GM10248 (cell line): ENCODE measurements at regions of chr9 and their contacts with region 1.

Region 1: DNA sequence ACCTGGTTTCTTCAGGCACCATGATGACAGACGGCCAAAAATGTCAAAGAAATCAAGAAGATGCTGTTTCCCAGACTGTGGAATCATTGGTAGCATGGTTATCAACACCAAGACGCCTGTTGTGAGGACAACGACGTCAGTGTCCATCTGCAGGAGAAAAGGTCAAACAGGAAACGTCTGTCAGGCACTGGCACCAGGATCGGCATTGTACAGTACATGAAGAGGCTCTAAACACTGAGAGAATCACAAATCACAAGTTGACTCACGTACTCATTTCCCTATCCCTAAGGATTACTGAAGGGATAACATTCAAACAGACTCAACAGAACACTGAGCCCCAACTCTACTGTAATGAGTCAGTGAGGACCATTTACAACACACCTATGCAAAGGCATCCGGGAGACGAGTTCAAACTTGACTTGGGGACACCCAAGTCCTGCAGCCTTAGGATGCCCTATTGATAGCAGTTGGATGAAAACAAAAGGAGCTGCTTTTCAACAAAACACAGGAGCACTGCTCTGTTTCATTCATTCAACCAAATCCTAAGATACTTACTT is 21.0 kb downstream of the TSC1 start:
- DNase-seq: no peak
- CTCF ChIP-seq: no peak

Region 2: DNA sequence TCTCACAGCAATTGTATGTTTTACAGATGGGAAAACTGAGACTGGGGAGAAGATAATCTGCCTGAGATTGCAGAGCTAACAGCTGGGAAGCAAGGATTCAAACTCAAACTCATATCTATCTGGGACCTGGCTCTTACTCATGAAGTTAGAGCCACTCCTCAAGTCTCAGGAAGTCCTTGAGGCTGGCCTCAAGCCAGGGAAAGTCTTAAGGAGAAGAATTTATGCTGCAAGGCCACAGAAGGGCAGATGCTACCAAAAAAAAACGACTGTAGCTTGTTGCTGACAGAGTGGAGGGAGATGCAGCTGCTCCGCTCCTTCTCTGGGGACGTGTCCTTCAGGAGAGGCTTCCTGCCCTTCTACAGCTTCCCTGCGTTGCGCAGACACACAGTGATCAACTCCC is 301.3 kb before region 1 on chr9:
- CTCF ChIA-PET with region 1: no interaction called
- POLR2A ChIA-PET with region 1: no interaction called
- DNase-seq: no peak
- CTCF ChIP-seq: no peak

Region 3: DNA sequence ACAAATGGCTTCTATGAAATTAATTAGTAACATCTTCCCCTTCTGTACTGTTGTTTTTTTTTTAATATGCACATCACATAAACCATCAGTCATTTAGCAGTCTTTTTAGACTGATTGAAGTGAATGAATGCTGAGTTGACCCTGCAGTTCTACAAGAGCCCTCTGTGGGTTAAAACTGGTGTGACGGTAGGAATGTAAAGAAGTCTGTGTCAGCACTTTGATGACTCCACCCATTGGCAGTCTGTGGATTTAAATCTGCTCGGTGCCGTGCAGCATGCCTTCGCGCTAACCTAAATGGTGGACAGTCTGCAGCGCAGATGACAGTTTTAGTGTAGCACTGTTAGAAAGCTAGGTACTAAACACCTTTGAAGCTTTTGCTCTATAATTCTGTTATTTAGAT is 250.1 kb before region 1 on chr9:
- CTCF ChIA-PET with region 1: no interaction called
- POLR2A ChIA-PET with region 1: no interaction called
- DNase-seq: no peak
- CTCF ChIP-seq: no peak

Region 4: GRCh38 chr9:132908635-132909034 is 14.8 kb before region 1 on chr9:
- CTCF ChIA-PET with region 1: interaction called, 135 read pairs
- POLR2A ChIA-PET with region 1: no interaction called
- DNase-seq: no peak
- CTCF ChIP-seq: no peak

Region 5: GRCh38 chr9:132935026-132935425 is 11.6 kb after region 1 on chr9:
- CTCF ChIA-PET with region 1: interaction called, 11 read pairs
- POLR2A ChIA-PET with region 1: no interaction called
- DNase-seq: no peak
- CTCF ChIP-seq: no peak